A549 (cell line): ENCODE measurements at regions of chr17 and their contacts with region 1.

Region 1: DNA sequence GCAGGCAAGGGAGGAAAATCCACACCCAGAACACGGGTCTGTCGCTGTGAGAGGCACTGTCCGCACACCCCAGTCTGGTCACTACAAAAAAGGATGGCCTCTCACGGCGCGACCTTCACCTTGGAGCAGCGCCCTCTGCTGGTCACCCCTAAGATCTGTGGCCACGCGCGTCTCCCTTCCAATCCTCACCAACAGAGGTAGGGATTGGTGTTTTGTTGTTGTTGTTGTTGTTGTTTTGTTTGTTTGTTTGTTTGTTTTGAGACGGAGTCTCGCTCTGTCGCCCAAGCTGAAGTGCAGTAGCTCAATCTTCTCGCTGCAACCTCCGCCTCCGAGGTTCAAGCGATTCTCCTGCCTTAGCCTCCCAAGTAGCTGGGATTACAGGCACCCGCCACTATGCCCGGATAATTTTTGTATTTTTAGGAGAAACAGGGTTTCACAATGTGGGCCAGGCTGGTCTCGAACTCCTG is 15.0 kb upstream of the C17orf58 start:
- DNase-seq: peak; percentile 66 to 71
- ATAC-seq: peak; percentile 93
- H3K4me3 ChIP-seq: peak overlapping the region; percentile 38
- H3K27ac ChIP-seq: peak overlapping the region; percentile 44 to 47; a peak in 3 of 6 replicates
- H3K4me1 ChIP-seq: no peaks in the 10 kb centered on the region
- CTCF ChIP-seq: peak; percentile 88
- EP300 ChIP-seq: no peak
- POLR2A ChIP-seq: no peak
- RAD21 ChIP-seq: peak; percentile 36 to 46; a peak in 2 of 5 replicates

Region 2: GRCh38 chr17:67993596-67994361 is 17.5 kb before region 1 on chr17:
- CTCF ChIA-PET with region 1: interaction called, 20 read pairs
- POLR2A ChIA-PET with region 1: interaction called, 4 read pairs
- DNase-seq: peak; percentile 77 to 90
- ATAC-seq: peak; percentile 71 to 73
- H3K4me3 ChIP-seq: peak overlapping the region; percentile 78
- H3K27ac ChIP-seq: peak overlapping the region; percentile 93 to 95
- H3K4me1 ChIP-seq: peaks cover 23% of the 10 kb centered on the region
- CTCF ChIP-seq: no peak
- EP300 ChIP-seq: no peak
- POLR2A ChIP-seq: peak; percentile 68
- RAD21 ChIP-seq: no peak

Region 3: GRCh38 chr17:67999291-67999911 is 11.8 kb before region 1 on chr17:
- CTCF ChIA-PET with region 1: interaction called, 20 read pairs
- POLR2A ChIA-PET with region 1: no interaction called
- DNase-seq: no peak
- ATAC-seq: peak in 1 of 2 experiments; percentile 6; a peak in 1 of 6 replicates
- H3K4me3 ChIP-seq: no peak overlapping the region
- H3K27ac ChIP-seq: no peak overlapping the region
- H3K4me1 ChIP-seq: peaks cover 20% of the 10 kb centered on the region
- CTCF ChIP-seq: no peak
- EP300 ChIP-seq: no peak
- POLR2A ChIP-seq: no peak
- RAD21 ChIP-seq: no peak